Activated CD8-positive, alpha-beta T cell treated with anti-CD3 and anti-CD28 coated beads, Interleukin-2, amount 10 ng/mL, durations not matched to agents 7 days and 5 days (primary cell): ENCODE measurements at regions of chr20 and their contacts with region 1.

Region 1: GRCh38 chr20:5557123-5557522 is 193.1 kb upstream of the SHLD1 start:
- DNase-seq: peak; percentile 73
- ATAC-seq: peak; percentile 82
- H3K4me3 Mint-ChIP-seq: no peak overlapping the region
- H3K27ac Mint-ChIP-seq: peak overlapping the region; percentile 16
- H3K4me1 Mint-ChIP-seq: no peaks in the 10 kb centered on the region
- H3K27me3 Mint-ChIP-seq: no peaks in the 10 kb centered on the region

Region 2: DNA sequence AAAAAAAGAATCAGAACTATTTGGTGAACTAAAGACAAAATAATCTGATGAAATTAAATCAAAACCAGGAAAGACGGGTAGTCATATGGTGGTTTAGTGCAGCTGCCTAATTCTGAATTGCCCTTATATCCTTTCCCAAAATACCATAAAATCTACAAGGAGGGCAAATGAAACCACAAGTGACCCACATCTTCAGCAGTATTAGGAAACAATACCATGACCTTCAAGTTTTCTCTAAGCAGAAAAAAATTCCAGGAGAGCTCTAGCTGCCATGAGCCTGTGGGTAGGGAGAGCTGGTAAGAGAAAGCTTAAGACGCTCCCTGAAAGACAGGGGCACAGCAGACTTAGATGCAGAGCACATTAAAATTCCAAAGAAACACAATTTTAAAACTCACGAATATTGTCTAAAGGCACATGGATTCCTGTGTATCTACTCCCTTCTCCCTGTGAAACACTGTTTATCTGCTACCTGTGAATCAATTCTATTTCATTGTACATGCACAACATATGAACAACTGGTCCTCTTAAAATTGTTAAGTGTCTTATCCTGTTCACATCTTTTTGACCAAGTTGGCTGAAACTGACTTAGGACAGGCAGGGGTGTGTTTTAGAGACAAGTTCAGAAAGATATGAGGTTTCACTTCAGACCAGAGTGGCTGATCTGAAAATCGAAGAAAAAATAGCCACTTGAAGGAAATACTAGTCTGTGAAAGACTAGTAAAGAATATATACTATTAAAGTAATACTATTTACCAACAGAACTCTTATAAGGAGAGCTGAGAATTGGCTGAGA is 39.5 kb after region 1 on chr20:
- CTCF ChIA-PET with region 1: interaction called, 15 read pairs
- POLR2A ChIA-PET with region 1: no interaction called
- DNase-seq: no peak
- ATAC-seq: no peak
- H3K4me3 Mint-ChIP-seq: no peak overlapping the region
- H3K27ac Mint-ChIP-seq: no peak overlapping the region
- H3K4me1 Mint-ChIP-seq: peaks cover 57% of the 10 kb centered on the region
- H3K27me3 Mint-ChIP-seq: no peaks in the 10 kb centered on the region

Region 3: DNA sequence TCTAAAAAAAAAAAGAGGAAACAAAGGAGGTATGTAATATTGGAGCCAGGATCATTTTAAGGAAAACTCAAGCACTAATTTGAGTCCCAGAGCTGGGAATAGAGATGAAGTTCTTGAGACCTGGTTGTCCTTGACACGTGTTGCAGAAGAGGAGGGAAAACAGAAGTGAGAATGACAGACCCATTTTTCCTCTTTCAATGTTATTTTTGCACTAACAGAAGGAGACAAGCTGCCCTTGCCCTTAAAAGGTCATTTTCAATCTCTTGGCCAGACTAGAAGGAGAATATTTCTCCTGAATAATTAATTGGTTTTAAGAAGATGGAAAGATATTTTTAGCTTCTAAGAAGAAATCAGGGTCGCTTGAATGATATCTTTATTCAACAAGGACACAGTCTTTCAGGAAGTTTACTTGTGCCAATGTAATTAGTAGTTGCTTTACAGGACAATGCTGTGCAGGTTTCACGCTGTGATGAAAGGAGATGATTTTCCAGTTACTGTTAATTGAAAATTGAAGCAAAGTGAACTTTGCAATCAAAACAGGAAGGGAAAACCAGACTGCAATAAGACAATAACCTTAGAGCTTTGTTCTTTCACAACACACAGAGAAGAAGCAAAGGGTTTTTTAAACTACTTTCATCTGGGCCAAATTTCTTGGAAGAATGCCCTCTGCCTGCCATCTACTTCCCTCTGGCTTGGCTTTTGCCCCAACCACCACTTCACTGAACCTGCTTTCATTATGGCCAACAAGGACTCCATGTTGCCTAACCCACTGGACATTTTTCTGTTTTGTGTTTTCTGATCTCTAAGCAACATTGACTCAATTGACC is 85.2 kb after region 1 on chr20:
- CTCF ChIA-PET with region 1: interaction called, 13 read pairs
- POLR2A ChIA-PET with region 1: no interaction called
- DNase-seq: no peak
- ATAC-seq: no peak
- H3K4me3 Mint-ChIP-seq: no peak overlapping the region
- H3K27ac Mint-ChIP-seq: peak overlapping the region; percentile 39
- H3K4me1 Mint-ChIP-seq: peaks cover 27% of the 10 kb centered on the region
- H3K27me3 Mint-ChIP-seq: no peaks in the 10 kb centered on the region

Region 4: GRCh38 chr20:5654557-5654956 is 97.4 kb after region 1 on chr20:
- CTCF ChIA-PET with region 1: no interaction called
- POLR2A ChIA-PET with region 1: no interaction called
- DNase-seq: no peak
- ATAC-seq: no peak
- H3K4me3 Mint-ChIP-seq: no peak overlapping the region
- H3K27ac Mint-ChIP-seq: no peak overlapping the region
- H3K4me1 Mint-ChIP-seq: peaks cover 21% of the 10 kb centered on the region
- H3K27me3 Mint-ChIP-seq: no peaks in the 10 kb centered on the region